Activated CD8-positive, alpha-beta T cell treated with anti-CD3 and anti-CD28 coated beads, Interleukin-2, amount 10 ng/mL, durations not matched to agents 7 days and 5 days (primary cell): ENCODE measurements at regions of chr9 and their contacts with region 1.

Region 1: DNA sequence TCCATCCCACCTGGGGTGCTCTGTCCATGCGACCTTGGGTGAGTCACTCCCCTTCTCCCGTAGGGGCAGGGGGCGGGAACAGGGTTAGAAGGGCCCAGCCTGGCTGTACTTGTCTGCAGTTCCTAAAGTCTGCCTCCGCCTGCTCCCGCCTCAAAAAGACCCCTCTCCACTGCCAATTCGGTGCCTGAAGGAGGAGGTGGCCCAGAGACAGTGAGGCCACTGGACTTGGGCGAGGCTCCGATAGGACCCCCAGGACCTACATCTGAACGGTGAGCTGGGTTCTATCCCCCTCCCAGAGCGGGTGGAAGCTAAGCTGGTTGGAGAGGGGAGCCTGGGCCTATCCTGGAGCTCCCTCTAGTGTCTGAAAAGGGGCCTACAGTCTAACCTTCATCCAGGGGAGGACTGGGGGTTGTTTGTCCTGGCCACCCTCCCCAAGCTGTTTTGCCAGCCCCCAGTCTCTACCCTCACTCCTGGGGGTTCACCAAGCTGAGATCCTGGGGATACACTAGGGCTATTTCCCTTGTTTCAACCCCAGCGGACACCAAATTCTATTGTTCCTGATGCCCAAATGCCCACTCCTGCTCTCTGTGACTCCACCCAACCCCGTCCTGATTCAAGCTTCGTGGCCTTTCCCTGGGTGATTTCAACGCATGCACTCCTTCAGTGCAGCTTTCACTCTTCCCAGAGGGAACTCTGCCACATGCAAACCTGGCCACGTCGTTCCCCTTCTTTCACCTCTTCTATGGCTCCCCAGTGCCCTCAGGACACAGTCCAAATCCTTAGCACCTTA is 6.1 kb upstream of the CRB2 start:
- DNase-seq: peak; percentile 80
- ATAC-seq: peak; percentile 75
- H3K4me3 Mint-ChIP-seq: no peak overlapping the region
- H3K27ac Mint-ChIP-seq: no peak overlapping the region
- H3K4me1 Mint-ChIP-seq: peaks cover 4% of the 10 kb centered on the region
- H3K27me3 Mint-ChIP-seq: peaks cover 3% of the 10 kb centered on the region

Region 2: DNA sequence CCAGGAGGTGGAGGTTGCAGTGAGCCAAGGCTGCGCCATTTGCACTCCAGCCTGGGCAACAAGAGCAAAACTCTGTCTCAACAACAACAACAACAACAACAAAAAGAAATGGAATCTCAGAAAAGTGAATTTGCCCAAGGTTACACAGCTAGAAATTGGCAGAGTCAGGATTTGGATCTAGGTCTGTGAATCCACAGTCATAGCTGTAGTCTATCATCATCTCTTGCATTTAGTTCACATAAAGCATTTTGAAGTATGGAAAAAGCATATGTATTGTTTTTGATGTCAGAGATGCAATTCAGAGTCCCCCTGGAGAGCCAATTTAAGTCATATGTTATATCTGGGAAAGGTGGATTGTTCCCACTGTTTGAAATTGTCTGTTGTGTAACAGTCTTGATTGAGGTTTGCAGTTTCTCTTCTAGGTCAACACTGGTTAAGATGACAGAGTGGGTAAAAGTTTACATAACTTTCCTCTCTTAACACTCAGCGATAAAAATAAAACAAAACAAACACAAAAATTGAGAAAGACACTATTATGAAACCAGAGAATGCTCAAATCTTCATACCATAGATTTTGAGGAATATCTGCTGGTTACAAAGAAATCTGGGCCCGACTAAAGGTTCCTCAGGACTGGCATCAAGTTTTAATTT is 337.9 kb before region 1 on chr9:
- CTCF ChIA-PET with region 1: no interaction called
- POLR2A ChIA-PET with region 1: no interaction called
- DNase-seq: no peak
- ATAC-seq: no peak
- H3K4me3 Mint-ChIP-seq: no peak overlapping the region
- H3K27ac Mint-ChIP-seq: no peak overlapping the region
- H3K4me1 Mint-ChIP-seq: no peaks in the 10 kb centered on the region
- H3K27me3 Mint-ChIP-seq: no peaks in the 10 kb centered on the region

Region 3: GRCh38 chr9:123081824-123082223 is 268.1 kb before region 1 on chr9:
- CTCF ChIA-PET with region 1: interaction called, 36 read pairs
- POLR2A ChIA-PET with region 1: no interaction called
- DNase-seq: peak; percentile 36
- ATAC-seq: no peak
- H3K4me3 Mint-ChIP-seq: no peak overlapping the region
- H3K27ac Mint-ChIP-seq: no peak overlapping the region
- H3K4me1 Mint-ChIP-seq: peaks cover 3% of the 10 kb centered on the region
- H3K27me3 Mint-ChIP-seq: no peaks in the 10 kb centered on the region

Region 4: DNA sequence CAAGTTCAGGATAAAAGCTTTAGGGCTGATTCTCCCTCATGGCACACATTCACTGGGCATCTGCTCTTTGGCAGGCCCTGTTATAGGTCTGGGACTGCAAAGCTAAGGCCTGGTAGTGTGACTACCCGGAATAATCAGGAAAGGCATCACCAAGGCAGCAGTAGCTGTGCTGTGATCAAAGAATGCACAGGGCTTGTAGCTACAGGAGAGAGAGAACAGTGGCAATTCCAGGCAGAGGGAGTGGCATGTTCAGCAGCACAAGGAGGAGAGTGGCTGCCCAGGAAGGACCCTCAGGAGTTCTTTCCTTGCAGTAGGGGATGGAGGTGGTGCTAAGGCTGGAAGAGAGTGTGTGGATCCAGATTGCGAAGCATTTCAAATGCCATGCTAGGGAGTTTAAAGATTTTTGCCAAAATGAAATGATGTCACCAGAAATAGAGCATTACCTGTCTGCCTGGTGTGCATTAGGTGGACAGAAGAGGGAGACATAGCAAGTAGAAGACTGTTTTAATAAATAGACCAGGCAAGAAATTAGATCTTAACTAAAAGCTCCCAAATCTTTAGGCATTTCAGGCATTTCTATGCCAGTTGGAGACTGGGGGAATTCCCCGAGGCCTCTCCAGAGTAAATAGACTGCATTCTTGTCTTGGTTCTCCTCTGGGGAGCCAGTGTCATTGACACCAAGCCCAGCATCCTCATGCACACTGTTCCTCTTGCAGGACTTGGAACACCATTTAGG is 247.3 kb before region 1 on chr9:
- CTCF ChIA-PET with region 1: interaction called, 38 read pairs
- POLR2A ChIA-PET with region 1: no interaction called
- DNase-seq: no peak
- ATAC-seq: no peak
- H3K4me3 Mint-ChIP-seq: no peak overlapping the region
- H3K27ac Mint-ChIP-seq: no peak overlapping the region
- H3K4me1 Mint-ChIP-seq: no peaks in the 10 kb centered on the region
- H3K27me3 Mint-ChIP-seq: no peaks in the 10 kb centered on the region

Region 5: GRCh38 chr9:123225374-123225813 is 124.5 kb before region 1 on chr9:
- CTCF ChIA-PET with region 1: interaction called, 19 read pairs
- POLR2A ChIA-PET with region 1: no interaction called
- DNase-seq: peak; percentile 54
- ATAC-seq: peak; percentile 92
- H3K4me3 Mint-ChIP-seq: no peak overlapping the region
- H3K27ac Mint-ChIP-seq: no peak overlapping the region
- H3K4me1 Mint-ChIP-seq: peaks cover 13% of the 10 kb centered on the region
- H3K27me3 Mint-ChIP-seq: no peaks in the 10 kb centered on the region

Region 6: GRCh38 chr9:123299558-123300126 is 50.2 kb before region 1 on chr9:
- CTCF ChIA-PET with region 1: interaction called, 11 read pairs
- POLR2A ChIA-PET with region 1: no interaction called
- DNase-seq: no peak
- ATAC-seq: no peak
- H3K4me3 Mint-ChIP-seq: no peak overlapping the region
- H3K27ac Mint-ChIP-seq: no peak overlapping the region
- H3K4me1 Mint-ChIP-seq: peaks cover 26% of the 10 kb centered on the region
- H3K27me3 Mint-ChIP-seq: peaks cover 2% of the 10 kb centered on the region

Region 7: GRCh38 chr9:123338710-123339665 is 10.9 kb before region 1 on chr9:
- CTCF ChIA-PET with region 1: interaction called, 14 read pairs
- POLR2A ChIA-PET with region 1: interaction called, 8 read pairs
- DNase-seq: peak; percentile 79
- ATAC-seq: peak; percentile 83
- H3K4me3 Mint-ChIP-seq: peak overlapping the region; percentile 75
- H3K27ac Mint-ChIP-seq: peak overlapping the region; percentile 97
- H3K4me1 Mint-ChIP-seq: peaks cover 46% of the 10 kb centered on the region
- H3K27me3 Mint-ChIP-seq: no peaks in the 10 kb centered on the region

Region 8: GRCh38 chr9:123387686-123388085 is 37.8 kb after region 1 on chr9:
- CTCF ChIA-PET with region 1: interaction called, 38 read pairs
- POLR2A ChIA-PET with region 1: no interaction called
- DNase-seq: no peak
- ATAC-seq: no peak
- H3K4me3 Mint-ChIP-seq: no peak overlapping the region
- H3K27ac Mint-ChIP-seq: no peak overlapping the region
- H3K4me1 Mint-ChIP-seq: no peaks in the 10 kb centered on the region
- H3K27me3 Mint-ChIP-seq: no peaks in the 10 kb centered on the region

Region 9: GRCh38 chr9:123406691-123407216 is 56.9 kb after region 1 on chr9:
- CTCF ChIA-PET with region 1: no interaction called
- POLR2A ChIA-PET with region 1: no interaction called
- DNase-seq: no peak
- ATAC-seq: no peak
- H3K4me3 Mint-ChIP-seq: no peak overlapping the region
- H3K27ac Mint-ChIP-seq: no peak overlapping the region
- H3K4me1 Mint-ChIP-seq: peaks cover 5% of the 10 kb centered on the region
- H3K27me3 Mint-ChIP-seq: no peaks in the 10 kb centered on the region